K562 (cell line): ENCODE measurements at regions of chr3 and their contacts with region 1.

Region 1: DNA sequence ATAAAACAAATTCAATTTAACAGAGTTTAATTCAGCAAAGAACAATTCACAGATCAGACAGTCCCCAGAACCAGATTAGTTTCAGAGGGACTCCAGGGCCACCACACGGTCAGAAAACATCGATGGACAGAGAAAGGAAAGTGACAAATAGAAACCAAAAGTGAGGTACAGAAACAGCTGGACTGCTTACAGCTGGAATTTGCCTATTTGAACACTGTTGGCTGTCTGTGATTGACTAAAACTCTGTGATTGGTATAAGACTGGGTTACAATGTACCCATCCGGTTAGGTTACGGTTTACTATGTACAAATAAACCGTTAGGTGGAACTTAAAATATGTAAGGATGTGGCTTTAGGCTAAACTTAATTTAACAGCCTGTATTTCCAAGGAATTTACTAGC is 30.3 kb downstream of the MOBP start:
- DNase-seq: no peak
- ATAC-seq: no peak
- H3K4me3 ChIP-seq: no peak overlapping the region
- H3K27ac ChIP-seq: no peak overlapping the region
- H3K4me1 ChIP-seq: peaks cover 0 to 8% of the 10 kb centered on the region in 2 experiments; a peak in 2 of 5 replicates
- H3K27me3 ChIP-seq: peaks cover 18 to 22% of the 10 kb centered on the region in 2 experiments
- CTCF ChIP-seq: no peak
- EP300 ChIP-seq: no peak
- POLR2A ChIP-seq: no peak
- RAD21 ChIP-seq: no peak

Region 2: DNA sequence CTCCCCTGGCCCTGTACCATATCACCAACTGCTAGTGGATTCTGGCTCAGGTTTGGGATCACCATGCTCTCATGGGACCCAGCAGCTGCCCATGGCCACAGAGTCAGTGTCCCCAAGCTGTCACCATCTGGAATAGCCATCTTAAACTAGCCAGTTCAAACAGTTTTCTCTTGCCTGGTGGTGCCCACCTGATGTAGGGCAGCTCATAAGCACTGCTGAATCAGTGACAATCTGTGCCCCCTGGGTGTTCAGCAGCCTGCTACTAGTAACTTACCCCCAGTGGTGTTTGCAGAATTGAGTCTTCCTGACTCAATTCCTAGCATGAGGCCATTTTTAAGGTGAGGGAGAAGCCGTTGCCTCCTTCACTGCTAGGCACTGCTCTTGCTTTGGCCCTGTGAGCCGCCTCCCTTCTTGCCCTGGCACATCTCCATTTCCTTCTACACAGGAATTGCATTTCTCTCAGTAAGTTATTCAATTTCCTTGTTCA is 83.3 kb before region 1 on chr3:
- CTCF ChIA-PET with region 1: interaction called, 4 read pairs
- POLR2A ChIA-PET with region 1: interaction called, 4 read pairs
- in situ Hi-C with region 1: no loop called
- intact Hi-C with region 1: loop called (anchors 1 kb)
- DNase-seq: peak in 2 of 4 experiments; percentile 36 to 38
- ATAC-seq: peak; percentile 57
- H3K4me3 ChIP-seq: no peak overlapping the region
- H3K27ac ChIP-seq: peak overlapping the region; percentile 45; the same call in 1 of the 3 replicates
- H3K4me1 ChIP-seq: peaks cover 5 to 8% of the 10 kb centered on the region in 2 experiments; a peak in 3 of 5 replicates
- H3K27me3 ChIP-seq: no peaks in the 10 kb centered on the region
- CTCF ChIP-seq: no peak
- EP300 ChIP-seq: no peak
- POLR2A ChIP-seq: peak; percentile 80
- RAD21 ChIP-seq: no peak

Region 3: GRCh38 chr3:39513791-39514369 is 16.1 kb after region 1 on chr3:
- CTCF ChIA-PET with region 1: no interaction called
- POLR2A ChIA-PET with region 1: no interaction called
- in situ Hi-C with region 1: no loop called
- intact Hi-C with region 1: no loop called
- DNase-seq: no peak
- ATAC-seq: no peak
- H3K4me3 ChIP-seq: no peak overlapping the region
- H3K27ac ChIP-seq: no peak overlapping the region
- H3K4me1 ChIP-seq: no peaks in the 10 kb centered on the region
- H3K27me3 ChIP-seq: peaks cover 0 to 9% of the 10 kb centered on the region in 2 experiments; a peak in 2 of 5 replicates
- CTCF ChIP-seq: no peak
- EP300 ChIP-seq: no peak
- POLR2A ChIP-seq: no peak
- RAD21 ChIP-seq: no peak